Activated CD4-positive, alpha-beta T cell treated with anti-CD3 and anti-CD28 coated beads for 36 hours (primary cell): ENCODE measurements at regions of chr1 and their contacts with region 1.

Region 1: GRCh38 chr1:19596714-19597495 is 47.2 kb upstream of the NBL1 start:
- DNase-seq: peak; percentile 98
- ATAC-seq: peak; percentile 86
- H3K4me3 Mint-ChIP-seq: peak overlapping the region; percentile 100
- H3K27ac Mint-ChIP-seq: peak overlapping the region; percentile 99
- H3K4me1 Mint-ChIP-seq: peaks cover 44% of the 10 kb centered on the region
- H3K27me3 Mint-ChIP-seq: no peaks in the 10 kb centered on the region

Region 2: GRCh38 chr1:18949686-18950400 is 647.1 kb before region 1 on chr1:
- CTCF ChIA-PET with region 1: no interaction called
- POLR2A ChIA-PET with region 1: no interaction called
- intact Hi-C with region 1: loop called in 1 of 2 experiments (anchors 5 kb)
- DNase-seq: peak; percentile 64
- ATAC-seq: no peak
- H3K4me3 Mint-ChIP-seq: peak overlapping the region; percentile 86
- H3K27ac Mint-ChIP-seq: peak overlapping the region; percentile 92
- H3K4me1 Mint-ChIP-seq: peaks cover 93% of the 10 kb centered on the region
- H3K27me3 Mint-ChIP-seq: no peaks in the 10 kb centered on the region

Region 3: DNA sequence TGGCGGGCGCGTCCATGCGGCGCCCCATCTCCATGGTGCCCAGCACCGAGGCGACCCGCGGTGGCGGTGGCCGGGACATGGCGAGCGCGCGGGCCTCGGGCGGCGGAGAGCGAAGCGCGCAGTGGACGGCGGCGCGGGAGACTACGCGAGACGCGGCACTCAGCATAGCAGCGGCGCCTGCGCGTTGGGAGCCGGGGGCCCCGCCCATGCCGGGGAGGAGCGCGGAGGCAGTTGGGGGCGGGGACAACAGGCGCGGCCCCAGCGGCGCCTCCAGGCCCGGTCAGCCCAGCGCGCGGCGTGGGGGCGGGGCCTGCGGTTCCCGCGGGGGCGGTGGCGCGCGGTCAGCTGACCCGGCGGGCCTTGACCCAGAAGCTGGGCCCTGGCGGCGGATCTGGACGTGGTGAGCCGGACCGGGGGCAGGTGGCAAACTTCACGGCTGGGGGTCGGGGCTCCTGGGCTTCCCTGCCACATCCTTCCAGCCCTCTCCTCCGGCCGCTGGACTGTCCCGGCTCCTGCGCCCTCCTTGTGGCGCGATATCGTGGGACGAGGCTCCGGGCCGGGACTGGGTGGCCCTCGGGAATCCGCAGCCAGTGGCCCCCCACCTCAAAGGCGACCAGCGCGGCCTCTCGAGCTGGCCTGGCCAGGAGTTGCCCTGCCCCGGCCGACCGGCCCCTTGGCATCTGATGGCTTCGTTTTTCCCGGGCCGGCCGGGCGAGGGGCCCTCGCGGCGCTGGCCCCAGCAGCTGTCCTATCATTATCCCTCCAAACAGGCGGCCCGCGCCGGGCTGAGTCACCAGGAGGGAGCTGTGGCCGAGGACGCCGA is 284.7 kb before region 1 on chr1 and contains the starts of genes AKR7A2 and SLC66A1:
- CTCF ChIA-PET with region 1: no interaction called
- POLR2A ChIA-PET with region 1: no interaction called
- intact Hi-C with region 1: loop called in 1 of 2 experiments (anchors 1 kb)
- DNase-seq: peak; percentile 95
- ATAC-seq: peak; percentile 97
- H3K4me3 Mint-ChIP-seq: peak within 1 kb of the TSS; percentile 78
- H3K27ac Mint-ChIP-seq: peak within 1 kb of the TSS; percentile 61
- H3K4me1 Mint-ChIP-seq: peaks cover 23% of the 10 kb centered on the region
- H3K27me3 Mint-ChIP-seq: no peaks in the 10 kb centered on the region
- total RNA-seq, gene AKR7A2: 41.3 to 43.0 TPM
- total RNA-seq, gene SLC66A1: 5.9 to 6.5 TPM

Region 4: GRCh38 chr1:19390901-19391595 is 205.9 kb before region 1 on chr1:
- CTCF ChIA-PET with region 1: no interaction called
- POLR2A ChIA-PET with region 1: no interaction called
- intact Hi-C with region 1: loop called in 1 of 2 experiments (anchors 1 kb)
- DNase-seq: peak; percentile 77
- ATAC-seq: peak; percentile 52
- H3K4me3 Mint-ChIP-seq: peak overlapping the region; percentile 73
- H3K27ac Mint-ChIP-seq: peak overlapping the region; percentile 95
- H3K4me1 Mint-ChIP-seq: peaks cover 81% of the 10 kb centered on the region
- H3K27me3 Mint-ChIP-seq: no peaks in the 10 kb centered on the region

Region 5: DNA sequence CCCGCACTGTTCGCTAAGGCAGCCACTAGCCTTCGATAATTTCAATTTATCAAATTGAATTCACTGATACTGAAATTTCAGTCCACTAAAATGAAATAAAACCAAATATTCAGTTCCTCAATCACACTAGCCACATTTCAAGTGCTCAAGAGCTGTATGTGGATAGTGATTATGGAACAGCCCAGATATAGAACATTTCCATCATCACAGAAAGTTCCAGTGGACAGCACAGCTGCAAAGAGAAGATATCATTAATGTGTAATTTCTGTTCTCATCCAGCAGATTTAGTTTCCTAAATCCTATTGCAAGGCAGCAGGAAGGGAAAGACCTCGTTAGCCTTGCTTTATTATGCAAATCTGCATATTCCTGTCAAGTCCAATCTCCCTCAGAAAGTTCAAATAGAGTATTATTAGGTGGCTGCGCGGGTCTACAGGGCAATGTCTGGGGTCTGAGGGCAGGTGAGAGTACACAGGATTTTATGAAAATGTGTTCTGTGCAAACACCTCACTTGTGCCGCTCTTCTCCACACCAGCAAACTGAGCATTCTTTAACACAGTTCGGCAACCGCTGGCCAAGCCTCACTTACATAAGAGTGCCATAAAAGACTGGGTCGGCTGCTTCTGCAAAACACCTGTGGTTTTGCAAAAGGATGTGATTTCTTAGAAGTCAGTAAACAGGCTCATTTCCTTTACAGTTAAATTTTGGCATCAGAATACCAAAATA is 134.0 kb before region 1 on chr1:
- CTCF ChIA-PET with region 1: no interaction called
- POLR2A ChIA-PET with region 1: no interaction called
- intact Hi-C with region 1: loop called in 1 of 2 experiments (anchors 1 kb)
- DNase-seq: peak; percentile 64
- ATAC-seq: no peak
- H3K4me3 Mint-ChIP-seq: peak overlapping the region; percentile 9
- H3K27ac Mint-ChIP-seq: peak overlapping the region; percentile 86
- H3K4me1 Mint-ChIP-seq: peaks cover 89% of the 10 kb centered on the region
- H3K27me3 Mint-ChIP-seq: no peaks in the 10 kb centered on the region

Region 6: GRCh38 chr1:19643602-19644394 is 46.9 kb after region 1 on chr1 and contains the start of gene NBL1:
- CTCF ChIA-PET with region 1: interaction called, 5 read pairs
- POLR2A ChIA-PET with region 1: interaction called, 3 read pairs
- intact Hi-C with region 1: loop called (anchors 1 to 5 kb)
- DNase-seq: peak; percentile 84
- ATAC-seq: peak; percentile 84
- H3K4me3 Mint-ChIP-seq: peak within 1 kb of the TSS; percentile 88
- H3K27ac Mint-ChIP-seq: peak within 1 kb of the TSS; percentile 64
- H3K4me1 Mint-ChIP-seq: peaks cover 21% of the 10 kb centered on the region
- H3K27me3 Mint-ChIP-seq: peaks cover 18% of the 10 kb centered on the region
- total RNA-seq, gene NBL1: 10.5 to 10.7 TPM